ENCODE measurements at regions of chr3 and their contacts with region 1.

Region 1: DNA sequence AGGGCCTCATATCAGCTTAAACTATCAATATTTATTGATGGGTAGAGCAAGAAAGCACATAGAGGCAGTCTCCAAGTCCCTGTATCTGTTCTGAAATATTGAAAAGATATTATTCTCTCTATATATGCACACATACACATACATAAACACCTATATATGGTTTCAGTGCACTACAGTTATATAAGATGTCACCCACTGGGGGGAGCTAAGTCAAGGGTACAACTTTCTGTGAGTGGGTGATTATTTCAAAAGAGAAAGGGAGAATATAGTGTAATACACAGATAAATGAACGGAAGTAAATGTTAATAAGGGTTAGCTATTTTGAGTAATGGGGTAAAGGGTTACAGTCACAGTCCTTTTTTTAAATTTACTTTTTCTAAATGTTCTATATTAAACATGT is 8.8 kb downstream of the SNTN start:
- DNase-seq: no peak
- ATAC-seq: peak; percentile 40; the same call in 1 of the 2 replicates
- H3K4me3 ChIP-seq: no peak overlapping the region
- H3K27ac ChIP-seq: no peak overlapping the region
- H3K4me1 ChIP-seq: no peaks in the 10 kb centered on the region
- H3K27me3 ChIP-seq: no peaks in the 10 kb centered on the region; the same call in 1 of the 2 replicates
- CTCF ChIP-seq: peak; percentile 36
- POLR2A ChIP-seq: no peak
- RAD21 ChIP-seq: peak; percentile 28; the same call in 1 of the 2 replicates

Region 2: GRCh38 chr3:62898530-62899496 is 762.4 kb before region 1 on chr3:
- CTCF ChIA-PET with region 1: no interaction called
- POLR2A ChIA-PET with region 1: interaction called, 12 read pairs
- dilution Hi-C with region 1: no loop called
- in situ Hi-C with region 1: no loop called
- intact Hi-C with region 1: no loop called
- DNase-seq: no peak
- ATAC-seq: no peak
- H3K4me3 ChIP-seq: no peak overlapping the region
- H3K27ac ChIP-seq: no peak overlapping the region
- H3K4me1 ChIP-seq: no peaks in the 10 kb centered on the region
- H3K27me3 ChIP-seq: no peaks in the 10 kb centered on the region
- CTCF ChIP-seq: no peak
- POLR2A ChIP-seq: no peak
- RAD21 ChIP-seq: no peak

Region 3: GRCh38 chr3:63349583-63350521 is 311.4 kb before region 1 on chr3:
- CTCF ChIA-PET with region 1: interaction called, 3 read pairs
- POLR2A ChIA-PET with region 1: no interaction called
- dilution Hi-C with region 1: no loop called
- in situ Hi-C with region 1: loop called (anchors 10 kb)
- intact Hi-C with region 1: no loop called
- DNase-seq: peak; percentile 65
- ATAC-seq: peak; percentile 85
- H3K4me3 ChIP-seq: no peak overlapping the region
- H3K27ac ChIP-seq: no peak overlapping the region
- H3K4me1 ChIP-seq: no peaks in the 10 kb centered on the region
- H3K27me3 ChIP-seq: peaks cover 2% of the 10 kb centered on the region; the same call in 1 of the 2 replicates
- CTCF ChIP-seq: peak; percentile 83
- POLR2A ChIP-seq: no peak
- RAD21 ChIP-seq: peak; percentile 71

Region 4: GRCh38 chr3:63624941-63625560 is 36.2 kb before region 1 on chr3:
- CTCF ChIA-PET with region 1: no interaction called
- POLR2A ChIA-PET with region 1: no interaction called
- dilution Hi-C with region 1: no loop called
- in situ Hi-C with region 1: no loop called
- intact Hi-C with region 1: no loop called
- DNase-seq: peak; percentile 89
- ATAC-seq: peak; percentile 62
- H3K4me3 ChIP-seq: no peak overlapping the region
- H3K27ac ChIP-seq: no peak overlapping the region
- H3K4me1 ChIP-seq: no peaks in the 10 kb centered on the region; the same call in 1 of the 2 replicates
- H3K27me3 ChIP-seq: no peaks in the 10 kb centered on the region
- CTCF ChIP-seq: no peak
- POLR2A ChIP-seq: no peak
- RAD21 ChIP-seq: no peak

Measured in IMR-90 (cell line).